OCI-LY7 (cell line): ENCODE measurements at regions of chr1 and their contacts with region 1.

Region 1: DNA sequence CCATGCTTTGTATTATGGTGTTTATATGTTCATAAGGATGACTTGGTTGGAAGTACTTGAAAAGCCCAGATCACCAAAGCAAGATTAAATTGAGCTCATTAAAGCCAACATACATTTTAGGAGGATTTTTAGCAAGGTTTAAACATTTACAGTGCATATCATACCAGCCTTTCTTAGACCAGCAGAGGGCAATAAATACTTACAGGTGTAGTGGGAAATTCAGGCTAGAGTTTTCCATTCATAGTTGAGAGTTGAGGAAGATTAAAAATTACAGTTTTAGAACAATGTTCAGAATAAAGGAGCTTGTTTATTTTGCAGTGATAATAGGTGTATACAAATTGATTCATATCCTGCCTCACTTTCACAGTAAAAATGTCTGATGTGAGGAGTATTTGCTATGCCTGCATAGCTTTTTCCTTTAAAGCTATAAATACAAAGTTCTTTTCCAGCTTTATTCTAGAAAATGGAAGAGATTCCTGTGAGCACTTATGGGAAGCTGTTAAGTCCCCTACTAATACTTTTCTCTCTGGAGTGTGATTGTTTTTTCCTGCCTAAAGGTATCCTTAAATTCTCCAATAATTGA is 35.3 kb downstream of the DTL start:
- DNase-seq: peak; percentile 31
- H3K4me3 ChIP-seq: no peak overlapping the region
- H3K27ac ChIP-seq: no peak overlapping the region
- H3K4me1 ChIP-seq: no peaks in the 10 kb centered on the region
- CTCF ChIP-seq: peak; percentile 76

Region 2: DNA sequence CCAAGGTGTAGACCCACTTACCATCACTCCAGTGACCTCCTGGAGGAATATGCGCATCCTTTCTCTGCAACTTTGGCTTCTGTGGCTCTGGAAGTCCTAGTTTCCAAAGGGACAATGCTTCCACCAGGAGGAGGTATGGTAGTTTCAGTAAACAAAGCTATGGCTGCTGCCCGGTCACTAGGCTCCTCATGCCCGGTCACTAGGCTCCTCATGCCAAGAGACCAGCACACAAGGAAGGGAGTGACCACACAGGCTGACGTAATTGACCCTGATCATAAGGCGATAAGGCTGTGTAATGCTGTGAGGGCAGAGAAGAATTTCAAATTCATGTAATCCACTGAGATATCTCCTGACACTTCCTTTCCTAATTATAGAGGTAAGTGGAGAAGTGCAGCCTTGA is 67.6 kb after region 1 on chr1:
- CTCF ChIA-PET with region 1: no interaction called
- POLR2A ChIA-PET with region 1: no interaction called
- intact Hi-C with region 1: no loop called
- DNase-seq: no peak
- H3K4me3 ChIP-seq: no peak overlapping the region
- H3K27ac ChIP-seq: no peak overlapping the region
- H3K4me1 ChIP-seq: no peaks in the 10 kb centered on the region
- CTCF ChIP-seq: no peak

Region 3: DNA sequence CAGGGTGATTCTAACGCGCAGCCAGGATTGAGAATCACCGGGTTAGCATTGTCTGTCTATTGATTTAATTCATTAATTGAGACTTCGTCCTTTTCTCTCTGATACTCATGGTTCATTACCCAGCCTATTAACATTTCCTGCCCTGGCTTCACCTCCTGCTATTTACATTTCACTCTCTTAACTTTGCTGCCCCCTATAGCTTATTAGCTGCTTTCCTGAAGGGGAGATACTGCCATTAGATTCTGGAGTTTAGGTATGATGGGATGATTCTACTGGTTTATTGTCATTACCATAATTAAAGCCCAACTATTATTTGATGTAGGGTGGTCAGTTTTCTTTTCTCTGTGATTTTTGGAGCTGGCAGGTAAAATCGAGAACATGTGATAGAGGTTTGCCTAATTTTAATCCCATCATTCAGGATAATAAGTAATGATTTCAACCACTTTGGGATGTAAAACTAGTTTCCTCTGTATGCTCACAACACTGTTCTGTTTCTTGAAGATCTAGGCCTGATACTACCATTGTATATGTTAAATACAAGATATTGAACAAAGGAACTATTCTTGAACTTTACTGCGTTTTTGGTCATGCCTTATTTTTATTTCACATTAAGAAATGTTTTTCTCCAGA is 220.8 kb after region 1 on chr1:
- CTCF ChIA-PET with region 1: interaction called, 6 read pairs
- POLR2A ChIA-PET with region 1: interaction called, 4 read pairs
- intact Hi-C with region 1: loop called (anchors 2 kb)
- DNase-seq: peak; percentile 66
- H3K4me3 ChIP-seq: no peak overlapping the region
- H3K27ac ChIP-seq: no peak overlapping the region
- H3K4me1 ChIP-seq: peaks cover 46% of the 10 kb centered on the region
- CTCF ChIP-seq: peak; percentile 91

Region 4: GRCh38 chr1:212368073-212368484 is 297.3 kb after region 1 on chr1:
- CTCF ChIA-PET with region 1: interaction called, 4 read pairs
- POLR2A ChIA-PET with region 1: no interaction called
- intact Hi-C with region 1: loop called (anchors 2 kb)
- DNase-seq: peak; percentile 76
- H3K4me3 ChIP-seq: no peak overlapping the region
- H3K27ac ChIP-seq: no peak overlapping the region
- H3K4me1 ChIP-seq: no peaks in the 10 kb centered on the region
- CTCF ChIP-seq: peak; percentile 94